OCI-LY7 (cell line): ENCODE measurements at regions of chr2 and their contacts with region 1.

Region 1: DNA sequence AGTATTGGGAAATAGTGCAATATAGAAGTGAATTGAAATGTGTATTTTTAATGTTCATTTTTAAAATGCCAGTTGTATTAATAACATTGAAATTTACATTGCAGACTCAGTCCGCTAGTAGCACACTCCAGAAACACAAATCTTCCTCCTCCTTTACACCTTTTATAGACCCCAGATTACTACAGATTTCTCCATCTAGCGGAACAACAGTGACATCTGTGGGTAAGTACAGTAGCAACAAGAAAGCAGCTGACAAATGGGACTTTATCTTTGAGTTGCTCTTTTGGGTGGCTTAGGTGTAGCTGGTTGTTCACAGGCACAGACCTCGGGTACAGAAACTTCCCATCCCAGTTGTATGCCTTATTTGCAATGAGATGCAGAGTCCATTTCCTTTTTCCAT is 118.2 kb upstream of the IL1R2 start:
- DNase-seq: peak; percentile 29
- H3K4me3 ChIP-seq: no peak overlapping the region
- H3K27ac ChIP-seq: no peak overlapping the region
- H3K4me1 ChIP-seq: no peaks in the 10 kb centered on the region
- CTCF ChIP-seq: peak; percentile 74

Region 2: GRCh38 chr2:101419096-101419663 is 454.4 kb before region 1 on chr2:
- CTCF ChIA-PET with region 1: no interaction called
- POLR2A ChIA-PET with region 1: no interaction called
- intact Hi-C with region 1: loop called (anchors 1 kb)
- DNase-seq: peak; percentile 67
- H3K4me3 ChIP-seq: no peak overlapping the region
- H3K27ac ChIP-seq: no peak overlapping the region
- H3K4me1 ChIP-seq: no peaks in the 10 kb centered on the region
- CTCF ChIP-seq: peak; percentile 89

Region 3: GRCh38 chr2:101608408-101609317 is 264.9 kb before region 1 on chr2:
- CTCF ChIA-PET with region 1: no interaction called
- POLR2A ChIA-PET with region 1: no interaction called
- intact Hi-C with region 1: no loop called
- DNase-seq: no peak
- H3K4me3 ChIP-seq: no peak overlapping the region
- H3K27ac ChIP-seq: no peak overlapping the region
- H3K4me1 ChIP-seq: no peaks in the 10 kb centered on the region
- CTCF ChIP-seq: no peak

Region 4: GRCh38 chr2:102193074-102193473 is 319.5 kb after region 1 on chr2:
- CTCF ChIA-PET with region 1: no interaction called
- POLR2A ChIA-PET with region 1: no interaction called
- intact Hi-C with region 1: no loop called
- DNase-seq: no peak
- H3K4me3 ChIP-seq: no peak overlapping the region
- H3K27ac ChIP-seq: no peak overlapping the region
- H3K4me1 ChIP-seq: no peaks in the 10 kb centered on the region
- CTCF ChIP-seq: no peak